HCT116 (cell line): ENCODE measurements at regions of chr17 and their contacts with region 1.

Region 1: GRCh38 chr17:81471804-81472456 is 40.7 kb downstream of the ACTG1 start:
- DNase-seq: peak; percentile 99
- ATAC-seq: peak; percentile 94
- H3K4me3 ChIP-seq: peak overlapping the region; percentile 51 to 58
- H3K27ac ChIP-seq: peak overlapping the region; percentile 59
- H3K4me1 ChIP-seq: peaks cover 6 to 30% of the 10 kb centered on the region in 2 experiments; a peak in 3 of 4 replicates
- H3K27me3 ChIP-seq: no peaks in the 10 kb centered on the region
- CTCF ChIP-seq: peak; percentile 74 to 90 (median 88)
- POLR2A ChIP-seq: peak; percentile 98
- RAD21 ChIP-seq: peak; percentile 99

Region 2: GRCh38 chr17:81142301-81143199 is 329.4 kb before region 1 on chr17:
- CTCF ChIA-PET with region 1: interaction called, 6 read pairs
- POLR2A ChIA-PET with region 1: no interaction called
- RAD21 ChIA-PET with region 1: no interaction called
- intact Hi-C with region 1: loop called (anchors 5 kb)
- DNase-seq: peak; percentile 76
- ATAC-seq: peak; percentile 93
- H3K4me3 ChIP-seq: no peak overlapping the region
- H3K27ac ChIP-seq: peak overlapping the region; percentile 25; the same call in 1 of the 2 replicates
- H3K4me1 ChIP-seq: peaks cover 6 to 12% of the 10 kb centered on the region in 2 experiments; a peak in 3 of 4 replicates
- H3K27me3 ChIP-seq: no peaks in the 10 kb centered on the region
- CTCF ChIP-seq: peak; percentile 78 to 85 (median 84); a peak in 5 of 6 replicates
- POLR2A ChIP-seq: no peak
- RAD21 ChIP-seq: peak; percentile 87

Region 3: DNA sequence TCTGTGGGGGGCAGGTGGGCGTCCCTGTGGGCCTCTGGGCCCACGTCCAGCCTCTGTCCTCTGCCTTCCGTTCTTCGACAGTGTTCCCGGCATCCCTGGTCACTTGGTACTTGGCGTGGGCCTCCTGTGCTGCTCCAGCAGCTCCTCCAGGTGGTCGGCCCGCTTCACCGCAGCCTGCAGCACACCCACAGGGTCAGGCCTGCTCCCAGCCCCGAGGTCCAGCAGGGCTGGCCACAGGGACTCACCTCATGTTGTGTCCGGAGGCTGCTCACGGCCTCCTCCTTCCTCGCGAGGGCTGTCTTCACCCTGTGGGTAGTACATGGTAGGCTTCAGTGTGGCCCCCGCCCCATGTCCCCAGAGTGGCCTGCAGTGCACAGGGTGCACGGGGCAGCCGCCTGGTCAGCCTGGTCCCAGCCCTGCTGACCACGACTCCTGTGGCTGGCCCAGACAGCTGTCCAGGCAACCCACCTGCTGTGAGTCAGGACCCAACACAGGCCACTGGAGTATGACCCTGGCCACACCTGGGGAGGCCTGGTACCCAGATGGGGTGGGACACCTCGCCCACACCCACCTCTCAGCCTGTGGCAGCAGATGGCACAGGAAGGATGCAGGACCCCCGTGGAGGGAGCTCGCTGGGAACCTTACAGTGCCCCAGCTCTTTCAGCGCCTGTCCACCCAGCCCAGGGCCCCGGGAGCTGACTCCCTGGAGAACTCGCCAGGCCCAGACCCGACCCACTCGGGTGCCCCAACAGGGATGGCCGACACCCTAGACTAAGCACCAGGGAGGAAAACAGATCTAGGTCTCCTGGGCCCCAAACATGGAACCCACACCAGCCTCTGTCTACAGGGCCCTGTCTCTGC is 282.0 kb before region 1 on chr17:
- CTCF ChIA-PET with region 1: no interaction called
- POLR2A ChIA-PET with region 1: no interaction called
- RAD21 ChIA-PET with region 1: no interaction called
- intact Hi-C with region 1: no loop called
- DNase-seq: no peak
- ATAC-seq: peak; percentile 60
- H3K4me3 ChIP-seq: no peak overlapping the region
- H3K27ac ChIP-seq: no peak overlapping the region
- H3K4me1 ChIP-seq: no peaks in the 10 kb centered on the region
- H3K27me3 ChIP-seq: no peaks in the 10 kb centered on the region
- CTCF ChIP-seq: peak; percentile 41 to 49 (median 44); a peak in 4 of 6 replicates
- POLR2A ChIP-seq: no peak
- RAD21 ChIP-seq: no peak; the same call in 1 of the 2 replicates

Region 4: GRCh38 chr17:81294856-81295680 is 176.9 kb before region 1 on chr17 and contains the start of gene SLC38A10:
- CTCF ChIA-PET with region 1: interaction called, 21 read pairs
- POLR2A ChIA-PET with region 1: interaction called, 12 read pairs
- RAD21 ChIA-PET with region 1: interaction called, 8 read pairs
- intact Hi-C with region 1: loop called (anchors 5 kb)
- DNase-seq: peak; percentile 73
- ATAC-seq: peak; percentile 81
- H3K4me3 ChIP-seq: peak within 1 kb of the TSS; percentile 78 to 82
- H3K27ac ChIP-seq: peak within 1 kb of the TSS; percentile 98
- H3K4me1 ChIP-seq: peaks cover 17 to 37% of the 10 kb centered on the region in 2 experiments; a peak in 3 of 4 replicates
- H3K27me3 ChIP-seq: no peaks in the 10 kb centered on the region
- CTCF ChIP-seq: no peak; a peak in 1 of 6 replicates
- POLR2A ChIP-seq: peak; percentile 87
- RAD21 ChIP-seq: no peak
- total RNA-seq, gene SLC38A10: 109 TPM

Region 5: GRCh38 chr17:81401723-81402529 is 70.0 kb before region 1 on chr17:
- CTCF ChIA-PET with region 1: interaction called, 7 read pairs
- POLR2A ChIA-PET with region 1: interaction called, 11 read pairs
- RAD21 ChIA-PET with region 1: no interaction called
- intact Hi-C with region 1: loop called (anchors 2 kb)
- DNase-seq: no peak
- ATAC-seq: peak; percentile 53
- H3K4me3 ChIP-seq: no peak overlapping the region
- H3K27ac ChIP-seq: peak overlapping the region; percentile 99
- H3K4me1 ChIP-seq: peaks cover 23 to 29% of the 10 kb centered on the region in 2 experiments
- H3K27me3 ChIP-seq: no peaks in the 10 kb centered on the region
- CTCF ChIP-seq: peak in 2 of 3 experiments; percentile 68 to 83; a peak in 4 of 6 replicates
- POLR2A ChIP-seq: no peak
- RAD21 ChIP-seq: no peak

Region 6: DNA sequence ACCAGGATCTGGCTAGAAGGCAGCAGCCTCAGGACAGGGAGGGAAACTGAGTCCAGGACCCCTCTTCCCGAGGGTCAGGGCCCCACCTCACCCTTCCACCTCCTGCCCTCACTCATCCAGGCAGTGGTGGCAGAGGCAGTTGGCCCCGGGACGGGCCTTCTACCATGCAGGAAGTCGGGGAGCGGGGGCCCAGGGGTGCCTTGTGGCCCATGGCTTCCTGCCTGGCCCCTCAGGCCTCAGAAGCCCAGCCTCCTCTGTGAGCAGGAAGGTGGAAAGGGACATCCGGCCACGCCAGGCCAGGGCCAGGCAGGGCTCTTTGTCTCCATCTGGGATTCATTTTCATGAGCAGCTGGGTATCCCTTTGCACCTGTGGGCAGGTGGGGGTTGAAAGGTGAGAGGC is 18.2 kb before region 1 on chr17:
- CTCF ChIA-PET with region 1: no interaction called
- POLR2A ChIA-PET with region 1: no interaction called
- RAD21 ChIA-PET with region 1: no interaction called
- intact Hi-C with region 1: no loop called
- DNase-seq: no peak
- ATAC-seq: no peak
- H3K4me3 ChIP-seq: no peak overlapping the region
- H3K27ac ChIP-seq: no peak overlapping the region
- H3K4me1 ChIP-seq: no peaks in the 10 kb centered on the region
- H3K27me3 ChIP-seq: no peaks in the 10 kb centered on the region
- CTCF ChIP-seq: no peak
- POLR2A ChIP-seq: no peak
- RAD21 ChIP-seq: no peak

Region 7: DNA sequence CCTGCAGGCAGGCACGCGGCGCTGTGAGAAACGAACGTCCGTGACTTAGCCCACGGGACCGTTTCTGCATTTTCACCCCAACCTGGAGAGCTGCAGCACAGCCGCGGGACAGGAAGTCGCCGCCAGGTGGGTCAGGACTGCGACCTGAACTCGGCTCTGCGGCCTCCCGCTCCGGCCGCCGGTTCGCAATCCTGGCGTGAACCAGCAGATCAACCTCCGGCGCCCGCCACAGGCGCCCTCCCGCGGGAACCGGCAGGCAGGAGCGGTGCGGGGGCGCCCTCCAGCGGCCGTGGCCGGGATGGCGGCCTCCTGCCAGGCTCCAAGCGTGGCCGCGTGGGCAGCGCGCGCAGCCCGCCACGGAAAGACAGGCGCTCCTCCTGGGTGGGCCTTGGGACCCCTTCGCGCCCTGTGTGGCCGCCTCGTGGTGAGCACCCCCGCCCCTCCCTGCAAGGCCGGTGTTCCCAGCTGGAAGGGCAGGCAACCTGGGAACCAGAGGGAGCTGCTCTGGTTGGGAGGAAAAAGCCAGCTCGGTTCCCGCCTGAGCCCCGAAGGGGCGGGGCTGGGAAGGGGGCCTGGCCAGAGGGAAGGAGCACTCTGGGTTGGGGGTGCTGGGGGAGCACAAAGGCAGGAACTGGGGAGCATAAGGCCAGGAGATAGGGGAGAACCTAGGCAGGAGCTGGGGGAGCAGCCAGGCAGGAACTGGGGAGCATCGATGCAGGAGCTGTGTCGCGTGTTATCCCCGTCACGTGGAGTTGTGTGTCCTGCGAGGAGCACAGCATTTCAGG is 12.5 kb after region 1 on chr17:
- CTCF ChIA-PET with region 1: interaction called, 17 read pairs
- POLR2A ChIA-PET with region 1: interaction called, 7 read pairs
- RAD21 ChIA-PET with region 1: interaction called in 1 of 2 experiments, 4 read pairs
- intact Hi-C with region 1: no loop called
- DNase-seq: peak; percentile 85
- ATAC-seq: peak; percentile 77
- H3K4me3 ChIP-seq: peak overlapping the region; percentile 45 to 56
- H3K27ac ChIP-seq: peak overlapping the region; percentile 74
- H3K4me1 ChIP-seq: peaks cover 21 to 52% of the 10 kb centered on the region in 2 experiments
- H3K27me3 ChIP-seq: no peaks in the 10 kb centered on the region
- CTCF ChIP-seq: peak; percentile 93 to 97 (median 96)
- POLR2A ChIP-seq: no peak
- RAD21 ChIP-seq: peak; percentile 99

Region 8: GRCh38 chr17:81601525-81602120 is 129.7 kb after region 1 on chr17:
- CTCF ChIA-PET with region 1: no interaction called
- POLR2A ChIA-PET with region 1: no interaction called
- RAD21 ChIA-PET with region 1: no interaction called
- intact Hi-C with region 1: no loop called
- DNase-seq: peak; percentile 49
- ATAC-seq: peak; percentile 96
- H3K4me3 ChIP-seq: no peak overlapping the region
- H3K27ac ChIP-seq: no peak overlapping the region
- H3K4me1 ChIP-seq: peaks cover 0 to 6% of the 10 kb centered on the region in 2 experiments; a peak in 2 of 4 replicates
- H3K27me3 ChIP-seq: no peaks in the 10 kb centered on the region
- CTCF ChIP-seq: peak; percentile 75 to 96 (median 92)
- POLR2A ChIP-seq: no peak
- RAD21 ChIP-seq: peak; percentile 91

Region 9: DNA sequence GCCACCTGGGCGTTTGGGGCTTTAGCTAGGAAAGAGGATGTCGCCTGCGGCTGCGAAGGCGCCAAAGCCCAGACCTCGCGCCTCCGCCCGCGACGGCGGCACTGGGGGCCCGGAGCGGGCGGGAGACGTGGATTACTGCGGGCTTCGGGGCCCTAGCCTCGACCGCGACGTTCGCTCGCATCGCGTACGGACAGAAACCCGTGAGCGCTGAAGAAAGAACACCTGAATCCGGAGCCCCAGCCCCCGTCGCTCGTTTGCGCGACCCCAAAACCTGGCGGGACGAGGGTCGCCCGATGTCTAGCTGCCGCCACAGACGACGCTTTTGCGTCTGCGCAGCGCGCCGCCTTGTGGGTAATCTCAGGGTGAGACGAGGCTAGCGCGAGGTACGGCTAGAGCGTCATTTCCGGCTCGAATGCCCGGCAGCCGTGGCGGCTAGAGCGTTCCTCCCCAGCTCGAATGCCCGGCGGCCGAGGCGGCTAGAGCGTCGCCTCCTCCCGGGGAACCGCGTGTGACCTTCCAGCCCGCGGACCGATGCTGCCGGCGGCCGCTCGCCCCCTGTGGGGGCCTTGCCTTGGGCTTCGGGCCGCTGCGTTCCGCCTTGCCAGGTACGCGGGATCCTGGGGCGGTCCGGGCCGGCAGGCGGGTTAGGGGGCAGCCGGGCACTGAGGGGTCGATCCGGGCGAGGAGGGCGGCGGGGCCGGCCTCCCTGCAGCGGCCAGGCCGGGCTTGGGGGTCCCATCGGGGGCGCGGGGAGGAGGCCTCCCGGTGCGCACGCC is 231.2 kb after region 1 on chr17 and contains the start of gene MRPL12:
- CTCF ChIA-PET with region 1: no interaction called
- POLR2A ChIA-PET with region 1: no interaction called
- RAD21 ChIA-PET with region 1: no interaction called
- intact Hi-C with region 1: no loop called
- DNase-seq: peak; percentile 90
- ATAC-seq: peak; percentile 79
- H3K4me3 ChIP-seq: peak within 1 kb of the TSS; percentile 68
- H3K27ac ChIP-seq: peak within 1 kb of the TSS; percentile 98
- H3K4me1 ChIP-seq: peaks cover 13 to 28% of the 10 kb centered on the region in 2 experiments
- H3K27me3 ChIP-seq: no peaks in the 10 kb centered on the region
- CTCF ChIP-seq: no peak
- POLR2A ChIP-seq: peak; percentile 91
- RAD21 ChIP-seq: no peak
- total RNA-seq, gene MRPL12: 260 TPM